Dorsolateral prefrontal cortex (tissue), 120 donors: ENCODE measurements at regions of chr2 and their contacts with region 1.

Region 1: DNA sequence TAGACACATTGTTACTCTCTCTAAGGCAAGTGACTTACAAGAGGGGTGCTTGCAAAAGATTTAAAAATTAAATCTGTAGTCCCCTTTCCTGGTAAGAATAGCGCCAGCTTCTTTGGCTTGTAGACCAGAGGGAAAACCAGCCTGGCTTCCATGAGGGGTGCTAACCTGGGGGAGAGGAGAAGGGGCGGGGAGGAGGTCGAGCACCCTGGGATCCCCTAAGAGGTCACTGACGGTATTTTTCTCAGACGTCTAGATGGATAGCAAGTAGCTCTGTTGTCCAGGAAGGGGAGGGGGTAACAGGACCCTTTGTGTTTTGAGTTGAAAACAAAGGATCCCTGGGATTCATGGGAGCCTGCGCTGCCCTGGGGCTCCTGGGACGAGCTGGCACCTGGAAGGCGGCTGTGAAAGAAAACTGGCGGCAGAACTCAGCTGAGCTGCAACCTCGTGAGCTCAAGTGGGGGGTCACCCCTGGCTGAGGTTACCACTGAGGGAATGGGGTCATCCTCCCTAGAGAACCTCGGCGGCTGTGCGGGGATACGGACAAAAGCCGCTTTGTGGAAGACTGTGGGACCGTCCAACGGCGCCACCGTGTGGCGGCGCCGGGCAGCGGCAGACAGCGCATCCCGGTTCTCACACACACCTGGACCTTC is 37.8 kb upstream of the MRPL19 start:
- DNase-seq: peak; percentile 40 to 78 (median 58)
- H3K4me3 ChIP-seq: peak overlapping the region in 50 of 59 donors; percentile 8 to 61 (median 40)
- H3K27ac ChIP-seq: peak overlapping the region in 1 of 59 donors; percentile 49
- H3K27me3 ChIP-seq: peaks cover 0 to 43% (median 6%) of the 10 kb centered on the region in 45 donors
- CTCF ChIP-seq: peak; percentile 73 to 98 (median 93)

Region 2: GRCh38 chr2:74919827-74920226 is 689.0 kb before region 1 on chr2:
- intact Hi-C with region 1: loop called (anchors 5 to 10 kb)
- DNase-seq: peak in 9 of 10 donors; percentile 22 to 79 (median 55)
- H3K4me3 ChIP-seq: peak overlapping the region in 54 of 59 donors; percentile 12 to 64 (median 45)
- H3K27ac ChIP-seq: no peak overlapping the region
- H3K27me3 ChIP-seq: peaks cover 0 to 10% (median 0%) of the 10 kb centered on the region in 45 donors
- CTCF ChIP-seq: peak; percentile 71 to 94 (median 88)

Region 3: DNA sequence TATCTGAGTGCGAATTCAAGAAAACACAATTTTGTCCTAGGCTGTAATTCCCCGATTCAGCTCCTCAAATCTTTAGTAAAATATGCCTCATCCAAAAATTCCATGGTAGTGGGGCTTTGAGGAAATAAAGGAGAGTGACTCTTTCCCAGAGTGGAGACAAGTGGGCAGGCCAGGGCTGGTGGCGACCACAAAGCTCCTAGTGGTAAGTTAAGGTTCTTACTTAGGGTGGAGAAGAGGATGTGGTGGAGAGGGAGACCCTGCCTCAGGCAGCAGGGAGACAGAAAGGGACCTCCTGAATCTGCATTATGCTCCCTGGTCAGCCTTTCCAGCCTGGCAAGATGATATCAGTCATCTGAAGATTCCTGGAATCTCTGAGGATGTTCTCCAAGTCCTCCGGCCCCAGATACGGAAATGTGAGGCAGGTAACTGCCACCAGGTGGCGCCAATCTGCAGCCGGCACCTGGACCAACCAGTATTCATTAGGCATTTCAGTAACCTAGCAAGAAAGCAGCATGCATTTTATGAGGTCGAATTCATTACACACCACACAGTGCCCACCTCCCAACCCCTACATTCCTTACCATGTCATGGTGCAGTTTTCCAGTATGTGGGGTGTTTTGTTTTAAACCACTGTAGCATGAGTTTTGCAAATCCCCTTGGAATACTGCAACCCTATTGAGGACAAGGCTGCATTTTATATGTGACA is 544.0 kb before region 1 on chr2:
- intact Hi-C with region 1: loop called in 1 of 2 experiments (anchors 10 kb)
- DNase-seq: peak in 9 of 10 donors; percentile 11 to 72 (median 54)
- H3K4me3 ChIP-seq: no peak overlapping the region
- H3K27ac ChIP-seq: no peak overlapping the region
- H3K27me3 ChIP-seq: no peaks in the 10 kb centered on the region
- CTCF ChIP-seq: peak; percentile 54 to 89 (median 77)

Region 4: GRCh38 chr2:75466708-75467311 is 142.0 kb before region 1 on chr2:
- intact Hi-C with region 1: loop called in 1 of 2 experiments (anchors 10 kb)
- DNase-seq: peak in 1 of 10 donors; percentile 27
- H3K4me3 ChIP-seq: no peak overlapping the region
- H3K27ac ChIP-seq: no peak overlapping the region
- H3K27me3 ChIP-seq: peaks cover 0 to 54% (median 5%) of the 10 kb centered on the region in 45 donors
- CTCF ChIP-seq: peak in 48 of 56 donors; percentile 13 to 51 (median 32)